ENCODE measurements at regions of chr6 and their contacts with region 1.

Region 1: DNA sequence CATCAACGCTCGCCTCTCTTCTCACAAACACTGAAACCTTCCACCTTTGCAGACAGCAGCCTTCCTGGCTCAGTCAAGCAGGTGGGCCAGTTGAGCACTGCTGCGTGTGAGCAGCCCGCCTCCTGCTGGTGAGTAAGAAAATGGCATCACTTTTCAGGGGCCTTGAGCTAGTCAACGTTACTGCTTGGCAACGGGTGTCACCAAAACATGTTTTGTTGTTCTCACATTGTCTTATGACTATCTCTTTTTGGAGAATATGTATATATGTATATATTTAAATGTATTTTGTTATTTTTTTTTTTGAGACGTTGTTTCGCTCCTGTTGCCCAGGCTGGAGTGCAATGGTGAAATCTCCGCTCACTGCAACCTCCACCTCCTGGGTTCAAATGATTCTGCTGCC is 97.0 kb upstream of the AGPAT4 start:
- DNase-seq: peak; percentile 71
- ATAC-seq: peak; percentile 87
- H3K4me3 Mint-ChIP-seq: no peak overlapping the region
- H3K27ac Mint-ChIP-seq: no peak overlapping the region
- H3K4me1 Mint-ChIP-seq: no peaks in the 10 kb centered on the region
- H3K27me3 Mint-ChIP-seq: no peaks in the 10 kb centered on the region
- CTCF ChIP-seq: peak; percentile 82

Region 2: GRCh38 chr6:160733050-160733646 is 637.7 kb before region 1 on chr6:
- CTCF ChIA-PET with region 1: interaction called, 7 read pairs
- POLR2A ChIA-PET with region 1: no interaction called
- intact Hi-C with region 1: loop called (anchors 5 kb)
- DNase-seq: peak; percentile 47
- ATAC-seq: peak; percentile 30
- H3K4me3 Mint-ChIP-seq: no peak overlapping the region
- H3K27ac Mint-ChIP-seq: no peak overlapping the region
- H3K4me1 Mint-ChIP-seq: no peaks in the 10 kb centered on the region
- H3K27me3 Mint-ChIP-seq: peaks cover 13% of the 10 kb centered on the region
- CTCF ChIP-seq: peak; percentile 72

Region 3: GRCh38 chr6:160930547-160931377 is 440.1 kb before region 1 on chr6:
- CTCF ChIA-PET with region 1: interaction called, 259 read pairs
- POLR2A ChIA-PET with region 1: no interaction called
- intact Hi-C with region 1: loop called (anchors 1 kb)
- DNase-seq: peak; percentile 51
- ATAC-seq: peak; percentile 73
- H3K4me3 Mint-ChIP-seq: peak overlapping the region; percentile 28
- H3K27ac Mint-ChIP-seq: no peak overlapping the region
- H3K4me1 Mint-ChIP-seq: no peaks in the 10 kb centered on the region
- H3K27me3 Mint-ChIP-seq: peaks cover 29% of the 10 kb centered on the region
- CTCF ChIP-seq: peak; percentile 89

Region 4: DNA sequence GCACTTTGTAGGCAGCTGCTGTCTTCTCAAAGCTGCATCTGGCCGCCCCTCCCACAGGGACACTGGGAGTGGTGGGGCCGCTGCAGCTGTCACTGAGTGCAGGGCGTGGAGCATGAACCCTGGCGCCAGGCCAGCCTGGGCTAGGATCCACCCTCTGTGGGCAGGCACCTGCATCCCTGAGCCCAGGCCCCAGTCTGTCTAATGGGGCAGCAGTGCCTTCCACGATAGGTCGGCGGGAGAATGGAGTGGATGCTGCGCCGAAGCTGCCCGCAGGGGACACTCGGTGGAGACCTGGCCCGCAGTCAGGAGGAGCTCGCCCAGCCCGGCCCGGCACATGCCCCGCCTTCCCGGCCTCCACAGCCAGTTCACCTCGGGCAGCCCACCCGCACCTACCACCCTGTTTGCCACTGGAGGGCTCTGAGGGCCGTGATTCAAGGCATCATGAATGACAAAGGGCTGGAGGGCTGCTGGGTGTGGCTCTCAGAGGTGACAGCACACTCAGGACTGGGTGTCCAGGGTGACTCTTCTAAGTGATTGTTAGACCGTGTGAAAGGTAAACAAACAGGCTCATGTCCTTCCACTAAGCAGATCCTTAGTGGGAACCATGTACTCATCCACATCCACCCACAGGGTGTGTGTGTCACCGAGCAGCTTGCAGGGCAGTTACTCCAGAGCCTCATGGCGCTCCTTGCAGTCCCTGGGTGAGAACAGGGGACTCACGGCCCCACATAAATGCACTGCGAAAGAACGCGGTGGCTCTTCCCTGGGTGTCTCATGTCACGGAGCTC is 230.9 kb before region 1 on chr6:
- CTCF ChIA-PET with region 1: interaction called, 6 read pairs
- POLR2A ChIA-PET with region 1: no interaction called
- intact Hi-C with region 1: loop called (anchors 5 kb)
- DNase-seq: no peak
- ATAC-seq: no peak
- H3K4me3 Mint-ChIP-seq: no peak overlapping the region
- H3K27ac Mint-ChIP-seq: no peak overlapping the region
- H3K4me1 Mint-ChIP-seq: no peaks in the 10 kb centered on the region
- H3K27me3 Mint-ChIP-seq: no peaks in the 10 kb centered on the region
- CTCF ChIP-seq: no peak

Region 5: DNA sequence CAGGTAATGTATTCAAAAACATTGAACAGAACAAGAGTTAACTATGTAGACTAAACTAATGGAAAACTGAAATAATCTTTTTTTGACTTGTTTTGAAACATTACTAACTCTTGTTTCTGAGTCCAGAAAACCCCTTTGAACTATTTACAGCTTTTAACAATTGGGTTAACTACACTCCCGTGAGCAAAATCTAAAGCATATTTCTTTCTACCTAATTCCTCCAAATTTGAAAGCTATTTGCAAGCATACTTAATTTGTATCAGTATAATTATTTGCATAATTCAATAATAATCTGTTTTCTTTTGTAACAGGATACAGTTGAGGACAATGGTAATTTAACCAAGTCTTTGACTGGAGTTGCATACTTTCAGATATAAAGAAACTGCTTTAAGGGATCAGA is 34.4 kb before region 1 on chr6:
- CTCF ChIA-PET with region 1: no interaction called
- POLR2A ChIA-PET with region 1: no interaction called
- intact Hi-C with region 1: no loop called
- DNase-seq: no peak
- ATAC-seq: no peak
- H3K4me3 Mint-ChIP-seq: no peak overlapping the region
- H3K27ac Mint-ChIP-seq: no peak overlapping the region
- H3K4me1 Mint-ChIP-seq: no peaks in the 10 kb centered on the region
- H3K27me3 Mint-ChIP-seq: peaks cover 2% of the 10 kb centered on the region
- CTCF ChIP-seq: no peak

Region 6: GRCh38 chr6:161353208-161353613 is 17.7 kb before region 1 on chr6:
- CTCF ChIA-PET with region 1: interaction called, 23 read pairs
- POLR2A ChIA-PET with region 1: no interaction called
- intact Hi-C with region 1: no loop called
- DNase-seq: no peak
- ATAC-seq: no peak
- H3K4me3 Mint-ChIP-seq: no peak overlapping the region
- H3K27ac Mint-ChIP-seq: no peak overlapping the region
- H3K4me1 Mint-ChIP-seq: peaks cover 6% of the 10 kb centered on the region
- H3K27me3 Mint-ChIP-seq: no peaks in the 10 kb centered on the region
- CTCF ChIP-seq: no peak